Caco-2 (cell line): ENCODE measurements at regions of chr2 and their contacts with region 1.

Region 1: GRCh38 chr2:179129574-179130238 is 79.8 kb upstream of the CCDC141 start:
- DNase-seq: peak in 1 of 2 experiments; percentile 20
- H3K4me3 ChIP-seq: no peak overlapping the region
- H3K4me3 Mint-ChIP-seq: no peak overlapping the region
- H3K27ac Mint-ChIP-seq: no peak overlapping the region
- H3K4me1 ChIP-seq: no peaks in the 10 kb centered on the region
- H3K4me1 Mint-ChIP-seq: no peaks in the 10 kb centered on the region
- H3K27me3 ChIP-seq: no peaks in the 10 kb centered on the region
- H3K27me3 Mint-ChIP-seq: no peaks in the 10 kb centered on the region
- CTCF ChIP-seq: peak; percentile 64 to 83

Region 2: DNA sequence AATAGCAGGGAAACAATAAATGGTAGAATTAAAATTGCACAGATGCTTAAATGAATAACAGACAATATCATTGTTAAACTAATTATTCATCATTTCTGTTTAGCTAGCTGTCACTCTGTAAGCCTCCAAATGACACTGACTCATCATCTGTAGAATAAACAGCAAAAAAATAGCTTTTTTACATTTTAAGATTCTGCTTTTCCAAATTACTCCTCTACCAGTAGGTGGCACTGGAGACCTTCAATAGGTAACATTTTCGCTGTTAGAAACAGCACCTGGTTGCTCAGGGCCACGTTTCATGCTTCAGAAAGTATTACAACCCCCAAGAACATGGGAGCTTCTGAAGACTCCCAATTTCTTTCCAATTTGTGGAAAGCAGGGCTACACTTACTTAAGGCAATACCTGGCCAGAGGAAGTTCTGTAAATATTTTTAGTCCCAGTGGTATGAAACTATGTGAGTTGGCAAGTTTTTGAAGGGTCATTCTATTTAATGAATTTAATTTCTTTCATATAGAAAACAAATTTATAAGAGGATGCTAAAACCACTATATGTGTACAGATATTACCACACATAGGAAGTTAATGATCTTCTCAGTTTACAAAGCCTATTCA is 367.8 kb before region 1 on chr2:
- CTCF ChIA-PET with region 1: interaction called, 5 read pairs
- POLR2A ChIA-PET with region 1: no interaction called
- intact Hi-C with region 1: loop called (anchors 10 kb)
- DNase-seq: peak; percentile 35 to 53
- H3K4me3 ChIP-seq: no peak overlapping the region
- H3K4me3 Mint-ChIP-seq: no peak overlapping the region
- H3K27ac Mint-ChIP-seq: no peak overlapping the region
- H3K4me1 ChIP-seq: no peaks in the 10 kb centered on the region
- H3K4me1 Mint-ChIP-seq: no peaks in the 10 kb centered on the region
- H3K27me3 ChIP-seq: no peaks in the 10 kb centered on the region
- H3K27me3 Mint-ChIP-seq: no peaks in the 10 kb centered on the region
- CTCF ChIP-seq: peak; percentile 74 to 83

Region 3: DNA sequence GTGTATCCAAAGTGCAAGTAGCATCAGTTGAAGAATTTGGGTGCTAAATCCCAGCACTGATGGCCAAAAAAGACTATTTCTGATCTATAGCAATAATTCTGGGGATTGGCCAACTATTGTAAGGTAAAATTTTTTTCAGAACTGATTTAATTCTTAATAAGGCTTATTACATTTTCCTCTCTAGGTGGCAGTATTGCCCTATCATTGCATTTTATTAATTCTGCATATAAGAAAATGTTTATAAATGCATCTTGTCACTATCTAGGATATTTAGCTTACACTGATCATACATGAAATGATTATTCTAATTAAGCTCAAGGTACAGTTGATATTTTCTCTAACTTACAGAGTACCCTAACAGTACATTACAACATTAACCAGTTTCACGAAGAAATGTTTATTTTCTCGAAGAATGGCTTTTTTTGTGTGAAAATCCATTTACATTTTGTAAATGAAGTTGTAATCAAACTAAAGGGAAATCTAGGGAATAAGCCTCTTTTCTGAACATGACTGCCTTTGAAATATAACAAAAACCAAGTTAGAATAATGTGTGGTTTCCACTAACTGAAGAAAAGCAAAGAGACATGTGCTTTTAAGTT is 333.5 kb before region 1 on chr2:
- CTCF ChIA-PET with region 1: no interaction called
- POLR2A ChIA-PET with region 1: no interaction called
- intact Hi-C with region 1: loop called (anchors 1 kb)
- DNase-seq: no peak
- H3K4me3 ChIP-seq: no peak overlapping the region
- H3K4me3 Mint-ChIP-seq: no peak overlapping the region
- H3K27ac Mint-ChIP-seq: no peak overlapping the region
- H3K4me1 ChIP-seq: no peaks in the 10 kb centered on the region
- H3K4me1 Mint-ChIP-seq: no peaks in the 10 kb centered on the region
- H3K27me3 ChIP-seq: no peaks in the 10 kb centered on the region
- H3K27me3 Mint-ChIP-seq: no peaks in the 10 kb centered on the region
- CTCF ChIP-seq: peak; percentile 25 to 56

Region 4: DNA sequence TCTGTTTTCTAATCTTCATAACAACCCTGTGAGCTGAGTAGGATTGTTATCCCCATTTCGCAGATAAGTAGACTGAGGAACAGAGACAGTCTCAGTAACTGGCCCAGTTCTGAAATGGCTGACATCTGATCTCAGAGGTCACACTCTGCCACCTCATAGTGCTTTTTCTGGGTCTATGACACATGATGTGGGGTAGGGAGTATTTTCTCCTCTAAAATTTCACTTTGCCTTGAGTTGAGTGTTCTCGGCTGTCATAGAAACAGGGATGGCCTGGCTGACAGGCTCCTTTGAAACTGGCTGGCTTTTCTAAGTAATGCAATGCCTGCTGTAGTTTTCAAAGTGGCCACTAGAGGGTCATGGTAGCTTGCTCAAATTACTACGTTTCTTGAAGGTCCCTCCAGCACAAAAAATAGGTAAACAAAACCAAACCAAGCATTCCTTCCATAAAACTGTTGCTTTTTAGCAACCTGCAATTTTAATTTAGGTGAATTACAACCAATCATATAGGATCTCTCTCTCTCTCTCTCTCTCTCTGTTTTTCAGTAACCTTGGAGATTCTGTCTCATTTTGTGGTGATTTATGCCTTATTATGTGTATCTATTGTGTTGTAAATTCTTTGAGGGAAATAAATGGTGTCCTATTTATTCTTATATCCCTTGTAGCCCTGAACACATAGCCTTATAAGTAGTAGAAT is 238.3 kb before region 1 on chr2:
- CTCF ChIA-PET with region 1: interaction called, 5 read pairs
- POLR2A ChIA-PET with region 1: no interaction called
- intact Hi-C with region 1: loop called (anchors 1 kb)
- DNase-seq: peak; percentile 72 to 80
- H3K4me3 ChIP-seq: no peak overlapping the region
- H3K4me3 Mint-ChIP-seq: no peak overlapping the region
- H3K27ac Mint-ChIP-seq: no peak overlapping the region
- H3K4me1 ChIP-seq: no peaks in the 10 kb centered on the region
- H3K4me1 Mint-ChIP-seq: no peaks in the 10 kb centered on the region
- H3K27me3 ChIP-seq: no peaks in the 10 kb centered on the region
- H3K27me3 Mint-ChIP-seq: no peaks in the 10 kb centered on the region
- CTCF ChIP-seq: peak; percentile 89 to 90

Region 5: GRCh38 chr2:179049546-179050311 is 80.0 kb before region 1 on chr2 and contains the start of gene CCDC141:
- CTCF ChIA-PET with region 1: interaction called, 6 read pairs
- POLR2A ChIA-PET with region 1: no interaction called
- intact Hi-C with region 1: loop called (anchors 5 kb)
- DNase-seq: peak; percentile 73 to 78
- H3K4me3 ChIP-seq: peak within 1 kb of the TSS; percentile 40
- H3K4me3 Mint-ChIP-seq: peak within 1 kb of the TSS; percentile 88
- H3K27ac Mint-ChIP-seq: peak within 1 kb of the TSS; percentile 87
- H3K4me1 ChIP-seq: peaks cover 26% of the 10 kb centered on the region
- H3K4me1 Mint-ChIP-seq: peaks cover 6% of the 10 kb centered on the region
- H3K27me3 ChIP-seq: no peaks in the 10 kb centered on the region
- H3K27me3 Mint-ChIP-seq: no peaks in the 10 kb centered on the region
- CTCF ChIP-seq: no peak
- total RNA-seq, gene CCDC141: 11.5 and 16.6 TPM in 2 replicates

Region 6: GRCh38 chr2:179818546-179818945 is 688.8 kb after region 1 on chr2:
- CTCF ChIA-PET with region 1: no interaction called
- POLR2A ChIA-PET with region 1: no interaction called
- intact Hi-C with region 1: no loop called
- DNase-seq: no peak
- H3K4me3 ChIP-seq: no peak overlapping the region
- H3K4me3 Mint-ChIP-seq: no peak overlapping the region
- H3K27ac Mint-ChIP-seq: no peak overlapping the region
- H3K4me1 ChIP-seq: no peaks in the 10 kb centered on the region
- H3K4me1 Mint-ChIP-seq: no peaks in the 10 kb centered on the region
- H3K27me3 ChIP-seq: no peaks in the 10 kb centered on the region
- H3K27me3 Mint-ChIP-seq: peaks cover 3% of the 10 kb centered on the region
- CTCF ChIP-seq: no peak